ENCODE measurements at regions of chr17 and their contacts with region 1.

Region 1: GRCh38 chr17:28494445-28495188 is 11.5 kb upstream of the FOXN1 start:
- DNase-seq: peak; percentile 67 to 84 (median 69)
- ATAC-seq: peak; percentile 37 to 84 (median 75)
- H3K4me3 ChIP-seq: no peak overlapping the region
- H3K27ac ChIP-seq: no peak overlapping the region
- H3K4me1 ChIP-seq: no peaks in the 10 kb centered on the region
- H3K27me3 ChIP-seq: peaks cover 0 to 10% (median 0%) of the 10 kb centered on the region in 9 donors
- CTCF ChIP-seq: peak; percentile 70 to 88 (median 83)
- POLR2A ChIP-seq: no peak

Region 2: DNA sequence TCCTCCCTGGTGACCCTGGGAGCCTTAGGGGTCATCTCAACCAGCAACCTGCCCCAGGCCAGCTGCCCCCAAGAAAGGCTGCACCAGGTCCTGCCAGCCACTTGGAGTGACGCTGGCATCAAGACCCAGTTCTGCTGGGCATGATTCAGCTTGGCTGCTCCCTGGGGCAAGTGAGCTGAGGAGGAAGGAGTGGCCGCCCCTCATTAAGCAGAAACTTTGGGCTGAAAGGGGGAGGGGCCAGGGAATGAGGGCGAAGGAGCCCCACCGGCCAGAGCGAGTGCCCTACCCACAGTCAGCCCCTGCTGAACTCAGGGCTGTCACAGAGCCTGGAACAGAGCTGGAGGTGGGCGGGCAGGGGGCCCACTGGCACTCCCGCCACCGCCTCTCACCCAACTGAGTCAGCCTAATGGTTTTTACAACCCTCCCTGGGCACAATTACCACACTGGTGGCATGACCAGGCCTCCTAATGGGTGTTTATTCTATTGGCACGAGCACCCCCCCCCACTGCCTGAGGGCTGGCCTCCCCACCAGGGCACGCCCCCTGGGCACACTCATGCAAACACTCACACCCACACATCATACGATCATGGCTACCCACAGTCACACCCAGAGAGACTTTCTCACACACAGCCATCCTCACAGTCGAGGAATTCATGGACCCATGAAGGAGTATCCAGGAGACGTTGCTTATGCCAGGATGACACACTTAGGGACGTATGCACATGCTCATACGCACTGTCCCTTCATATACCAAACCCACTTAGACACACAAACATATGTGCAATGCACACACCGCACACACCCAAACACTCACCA is 38.6 kb after region 1 on chr17:
- intact Hi-C with region 1: loop called in 5 of 10 experiments (anchors 5 kb)
- DNase-seq: no peak
- ATAC-seq: no peak
- H3K4me3 ChIP-seq: no peak overlapping the region
- H3K27ac ChIP-seq: no peak overlapping the region
- H3K4me1 ChIP-seq: no peaks in the 10 kb centered on the region
- H3K27me3 ChIP-seq: peaks cover 0 to 6% (median 0%) of the 10 kb centered on the region in 9 donors
- CTCF ChIP-seq: no peak
- POLR2A ChIP-seq: no peak

Region 3: GRCh38 chr17:28540231-28540630 is 45.6 kb after region 1 on chr17:
- intact Hi-C with region 1: loop called in 8 of 10 experiments (anchors 2 to 5 kb)
- DNase-seq: peak in 1 of 5 donors; percentile 41
- ATAC-seq: no peak
- H3K4me3 ChIP-seq: no peak overlapping the region
- H3K27ac ChIP-seq: no peak overlapping the region
- H3K4me1 ChIP-seq: no peaks in the 10 kb centered on the region
- H3K27me3 ChIP-seq: peaks cover 0 to 3% (median 0%) of the 10 kb centered on the region in 9 donors
- CTCF ChIP-seq: no peak
- POLR2A ChIP-seq: no peak

Region 4: GRCh38 chr17:28552246-28552999 is 57.8 kb after region 1 on chr17 and contains the start of gene UNC119:
- intact Hi-C with region 1: loop called in 1 of 10 experiments (anchors 5 kb)
- DNase-seq: peak; percentile 73 to 90 (median 86)
- ATAC-seq: peak; percentile 83 to 97 (median 94)
- H3K4me3 ChIP-seq: peak within 1 kb of the TSS; percentile 80 to 98 (median 92)
- H3K27ac ChIP-seq: peak within 1 kb of the TSS in 11 of 12 donors; percentile 47 to 85 (median 70)
- H3K4me1 ChIP-seq: peaks cover 0 to 50% (median 15%) of the 10 kb centered on the region in 12 donors
- H3K27me3 ChIP-seq: no peaks in the 10 kb centered on the region
- CTCF ChIP-seq: no peak
- POLR2A ChIP-seq: peak in 1 of 2 donors; percentile 76
- total RNA-seq, gene UNC119: 12.8 to 30.7 (median 19.2) TPM

Region 5: GRCh38 chr17:28612936-28613872 is 118.6 kb after region 1 on chr17:
- intact Hi-C with region 1: loop called (anchors 1 to 5 kb)
- DNase-seq: no peak
- ATAC-seq: peak; percentile 12 to 60 (median 42)
- H3K4me3 ChIP-seq: no peak overlapping the region
- H3K27ac ChIP-seq: no peak overlapping the region
- H3K4me1 ChIP-seq: no peaks in the 10 kb centered on the region
- H3K27me3 ChIP-seq: no peaks in the 10 kb centered on the region
- CTCF ChIP-seq: peak; percentile 52 to 79 (median 68)
- POLR2A ChIP-seq: no peak

Measured in heart left ventricle (tissue), 16 donors.